ENCODE measurements at regions of chr1 and their contacts with region 1.

Region 1: GRCh38 chr1:203304919-203305808 is at the start of gene BTG2:
- DNase-seq: peak; percentile 97
- H3K4me3 Mint-ChIP-seq: peak within 1 kb of the TSS; percentile 99
- H3K27ac Mint-ChIP-seq: peak within 1 kb of the TSS; percentile 98
- H3K4me1 Mint-ChIP-seq: peaks cover 62% of the 10 kb centered on the region
- H3K27me3 Mint-ChIP-seq: no peaks in the 10 kb centered on the region
- total RNA-seq, gene BTG2: 106 and 108 TPM in 2 replicates

Region 2: GRCh38 chr1:203163891-203164635 is 141.1 kb before region 1 on chr1:
- intact Hi-C with region 1: no loop called
- DNase-seq: no peak
- H3K4me3 Mint-ChIP-seq: no peak overlapping the region
- H3K27ac Mint-ChIP-seq: no peak overlapping the region
- H3K4me1 Mint-ChIP-seq: no peaks in the 10 kb centered on the region
- H3K27me3 Mint-ChIP-seq: peaks cover 11% of the 10 kb centered on the region

Region 3: GRCh38 chr1:203287109-203287893 is 17.9 kb before region 1 on chr1:
- intact Hi-C with region 1: loop called (anchors 1 kb)
- DNase-seq: peak; percentile 95
- H3K4me3 Mint-ChIP-seq: peak overlapping the region; percentile 82
- H3K27ac Mint-ChIP-seq: peak overlapping the region; percentile 97
- H3K4me1 Mint-ChIP-seq: peaks cover 69% of the 10 kb centered on the region
- H3K27me3 Mint-ChIP-seq: peaks cover 2% of the 10 kb centered on the region

Region 4: DNA sequence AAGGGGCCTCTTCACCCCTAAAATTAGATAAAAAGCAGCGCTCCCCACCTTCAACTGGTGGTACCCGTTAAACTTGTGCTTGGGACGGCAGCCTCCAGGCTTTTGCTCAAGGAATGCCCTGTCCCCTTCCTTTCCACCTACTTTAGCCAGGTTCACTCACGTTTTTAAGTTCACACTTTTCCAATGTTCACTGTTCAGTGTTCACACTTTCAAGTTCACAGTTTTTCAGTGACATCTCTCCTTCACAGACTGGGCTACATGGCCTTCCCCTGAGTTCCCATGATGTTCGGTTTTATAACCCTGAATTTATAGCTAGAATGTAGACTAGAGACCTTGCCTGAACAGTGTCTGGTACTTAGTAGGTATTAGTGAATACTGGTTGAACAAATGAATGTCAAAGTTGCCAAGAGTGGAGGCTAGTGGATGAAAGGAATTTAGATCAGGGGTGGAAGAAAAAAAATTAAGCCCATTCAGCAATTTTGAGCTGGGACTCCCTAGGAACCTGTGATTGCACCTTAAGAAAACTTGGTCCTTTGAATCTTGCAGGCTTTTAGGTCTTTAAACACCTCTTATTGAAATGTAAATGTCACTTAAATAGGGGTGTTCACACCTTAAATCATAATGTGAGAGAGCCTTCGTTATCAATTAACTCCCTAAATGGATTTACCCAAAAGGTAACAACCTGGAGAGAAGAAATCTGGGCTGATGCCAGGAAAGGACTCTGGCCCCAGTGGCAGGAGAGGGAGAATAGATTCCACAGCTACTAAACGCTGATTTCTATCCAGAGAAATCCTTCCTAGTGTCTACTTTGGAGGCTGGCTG is 12.5 kb after region 1 on chr1:
- intact Hi-C with region 1: loop called (anchors 1 kb)
- DNase-seq: no peak
- H3K4me3 Mint-ChIP-seq: no peak overlapping the region
- H3K27ac Mint-ChIP-seq: no peak overlapping the region
- H3K4me1 Mint-ChIP-seq: peaks cover 48% of the 10 kb centered on the region
- H3K27me3 Mint-ChIP-seq: no peaks in the 10 kb centered on the region

Region 5: GRCh38 chr1:203326830-203327683 is 21.9 kb after region 1 on chr1:
- intact Hi-C with region 1: loop called (anchors 1 kb)
- DNase-seq: peak; percentile 98
- H3K4me3 Mint-ChIP-seq: peak overlapping the region; percentile 83
- H3K27ac Mint-ChIP-seq: peak overlapping the region; percentile 94
- H3K4me1 Mint-ChIP-seq: peaks cover 61% of the 10 kb centered on the region
- H3K27me3 Mint-ChIP-seq: no peaks in the 10 kb centered on the region